IMR-90 (cell line): ENCODE measurements at regions of chrX and their contacts with region 1.

Region 1: GRCh38 chrX:115226929-115227328 is 7.0 kb downstream of the LRCH2 start:
- DNase-seq: peak; percentile 28
- ATAC-seq: peak; percentile 62
- H3K4me3 ChIP-seq: no peak overlapping the region
- H3K27ac ChIP-seq: no peak overlapping the region
- H3K4me1 ChIP-seq: no peaks in the 10 kb centered on the region
- H3K27me3 ChIP-seq: no peaks in the 10 kb centered on the region
- CTCF ChIP-seq: peak; percentile 53
- POLR2A ChIP-seq: no peak
- RAD21 ChIP-seq: peak; percentile 54

Region 2: DNA sequence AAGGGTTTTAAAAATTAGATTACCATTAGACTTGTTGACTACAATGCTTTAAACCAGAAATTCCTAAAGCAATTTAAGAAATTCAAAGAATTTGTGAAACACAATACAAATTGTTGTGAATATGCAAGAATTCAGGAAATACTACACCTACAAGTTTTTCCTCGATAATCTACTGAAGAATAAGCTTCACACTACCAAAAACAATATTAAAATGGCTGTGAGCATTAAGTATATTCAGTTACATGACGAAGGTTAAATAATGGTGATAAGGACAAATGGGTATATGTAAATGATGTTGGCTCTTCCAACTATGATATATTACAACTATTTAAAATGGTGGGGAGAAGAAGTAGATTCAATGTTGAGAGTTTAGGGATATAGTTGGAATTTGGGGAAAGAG is 754.1 kb before region 1 on chrX:
- CTCF ChIA-PET with region 1: no interaction called
- POLR2A ChIA-PET with region 1: no interaction called
- dilution Hi-C with region 1: no loop called
- in situ Hi-C with region 1: no loop called
- intact Hi-C with region 1: no loop called
- DNase-seq: no peak
- ATAC-seq: no peak
- H3K4me3 ChIP-seq: no peak overlapping the region
- H3K27ac ChIP-seq: no peak overlapping the region
- H3K4me1 ChIP-seq: no peaks in the 10 kb centered on the region
- H3K27me3 ChIP-seq: no peaks in the 10 kb centered on the region
- CTCF ChIP-seq: no peak
- POLR2A ChIP-seq: no peak
- RAD21 ChIP-seq: no peak

Region 3: DNA sequence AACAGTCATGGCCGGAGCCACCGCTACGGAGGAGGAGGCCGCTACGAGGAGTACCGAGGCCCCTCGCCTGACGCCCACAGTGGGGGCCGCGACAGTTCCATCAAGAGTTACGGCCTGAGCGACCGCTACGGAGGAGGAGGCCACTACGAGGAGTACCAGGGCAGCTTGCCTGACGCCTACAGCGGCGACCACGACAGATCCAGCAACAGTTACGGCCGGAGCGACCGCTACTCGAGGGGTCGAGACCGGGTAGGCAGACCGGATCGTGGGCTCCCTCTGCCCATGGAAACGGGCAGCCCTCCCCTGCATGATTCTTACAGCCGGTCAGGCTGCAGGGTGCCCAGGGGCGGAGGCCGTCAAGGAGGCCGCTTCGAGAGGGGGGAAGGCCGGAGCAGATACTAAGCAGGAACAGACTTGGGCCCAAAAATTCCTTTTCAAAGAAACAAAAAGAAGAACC is 34.7 kb before region 1 on chrX:
- CTCF ChIA-PET with region 1: no interaction called
- POLR2A ChIA-PET with region 1: no interaction called
- dilution Hi-C with region 1: no loop called
- in situ Hi-C with region 1: no loop called
- intact Hi-C with region 1: no loop called
- DNase-seq: no peak
- ATAC-seq: no peak
- H3K4me3 ChIP-seq: no peak overlapping the region
- H3K27ac ChIP-seq: no peak overlapping the region
- H3K4me1 ChIP-seq: no peaks in the 10 kb centered on the region
- H3K27me3 ChIP-seq: no peaks in the 10 kb centered on the region
- CTCF ChIP-seq: no peak
- POLR2A ChIP-seq: no peak
- RAD21 ChIP-seq: no peak

Region 4: DNA sequence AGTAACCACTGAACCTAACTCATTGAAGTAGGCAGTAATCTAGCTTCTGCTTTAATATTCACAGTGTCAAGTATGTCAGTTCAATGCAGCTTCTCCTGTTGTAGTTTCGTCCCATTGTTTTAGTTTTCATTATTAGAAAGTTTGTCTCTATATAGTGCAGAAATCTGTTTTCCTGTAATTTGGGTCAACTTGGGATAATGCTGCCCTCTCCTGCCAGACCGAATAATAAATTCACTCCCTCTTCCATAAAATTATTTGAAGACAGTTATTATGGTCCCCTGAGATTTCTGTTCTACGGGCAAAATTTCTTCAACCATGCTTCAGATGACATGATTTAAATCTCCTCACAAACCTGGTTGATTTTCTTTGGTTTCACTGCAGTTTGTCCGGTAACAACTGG is 57.9 kb after region 1 on chrX:
- CTCF ChIA-PET with region 1: no interaction called
- POLR2A ChIA-PET with region 1: no interaction called
- dilution Hi-C with region 1: no loop called
- in situ Hi-C with region 1: no loop called
- intact Hi-C with region 1: loop called (anchors 2 kb)
- DNase-seq: no peak
- ATAC-seq: no peak
- H3K4me3 ChIP-seq: no peak overlapping the region
- H3K27ac ChIP-seq: no peak overlapping the region
- H3K4me1 ChIP-seq: no peaks in the 10 kb centered on the region
- H3K27me3 ChIP-seq: peaks cover 2% of the 10 kb centered on the region
- CTCF ChIP-seq: peak; percentile 36
- POLR2A ChIP-seq: no peak
- RAD21 ChIP-seq: peak; percentile 40